Left lung (tissue), 14 donors: ENCODE measurements at regions of chr14 and their contacts with region 1.

Region 1: DNA sequence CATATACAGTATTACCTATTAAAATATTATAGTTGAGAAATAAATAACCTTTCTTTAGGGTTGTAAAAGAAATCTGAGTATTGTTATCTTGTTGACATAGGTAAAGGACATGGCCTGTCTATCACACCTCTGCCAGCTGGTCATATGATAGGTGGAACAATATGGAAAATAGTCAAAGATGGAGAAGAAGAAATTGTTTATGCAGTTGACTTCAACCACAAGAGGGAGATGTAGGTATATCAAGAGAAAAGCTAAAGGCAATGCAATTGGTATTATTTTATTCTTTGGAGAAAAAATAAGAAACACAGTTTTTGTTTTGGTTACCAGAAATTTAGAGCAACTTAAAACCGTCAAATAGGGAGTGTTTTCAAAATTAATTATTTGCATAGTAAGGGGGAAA is 13.5 kb downstream of the CPSF2 start:
- DNase-seq: peak in 1 of 4 donors; percentile 53
- ATAC-seq: no peak
- H3K4me3 ChIP-seq: no peak overlapping the region
- H3K27ac ChIP-seq: no peak overlapping the region
- H3K4me1 ChIP-seq: peaks cover 0 to 4% of the 10 kb centered on the region in 2 donors
- H3K27me3 ChIP-seq: no peaks in the 10 kb centered on the region
- CTCF ChIP-seq: peak in 1 of 2 donors; percentile 36

Region 2: DNA sequence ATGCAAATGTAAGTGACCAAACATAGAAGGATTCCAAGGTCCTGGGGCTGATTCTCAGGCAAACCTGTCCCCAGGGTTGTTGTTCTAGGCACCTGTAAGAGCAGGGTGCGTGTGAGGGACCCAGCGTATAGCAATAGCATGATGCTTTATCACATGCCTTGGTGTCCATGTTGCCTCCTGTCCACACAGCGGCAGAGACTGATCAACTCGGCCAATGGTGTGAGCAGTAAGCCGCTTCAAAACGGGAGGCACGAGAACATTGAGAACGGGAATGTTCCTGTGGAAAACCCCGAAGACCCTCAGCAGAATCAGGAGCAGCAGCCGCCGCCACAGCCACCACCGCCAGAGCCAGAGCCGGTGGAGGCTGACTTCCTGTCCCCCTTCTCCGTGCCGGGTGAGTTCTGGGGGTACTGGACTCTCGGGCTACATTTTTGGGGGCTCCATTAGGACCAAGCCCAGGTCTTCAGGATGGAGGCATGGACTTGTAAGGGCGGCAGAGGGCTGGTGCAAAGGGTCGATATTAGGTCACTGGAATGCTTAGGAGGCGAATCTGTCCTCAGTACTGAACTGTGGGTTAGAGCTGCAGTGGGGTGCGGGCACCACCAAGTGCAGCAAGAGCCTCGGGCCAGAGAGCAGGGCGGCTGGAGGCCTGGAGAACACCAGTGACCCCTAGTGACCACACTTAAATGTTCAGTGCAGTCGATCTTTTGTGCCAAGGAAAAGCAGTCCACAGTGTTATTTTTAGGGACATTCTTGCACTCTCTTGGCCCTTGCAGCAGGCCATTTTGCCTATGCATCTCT is 321.1 kb after region 1 on chr14:
- intact Hi-C with region 1: loop called in 1 of 2 experiments (anchors 5 kb)
- DNase-seq: peak; percentile 57 to 90 (median 76)
- ATAC-seq: peak; percentile 93
- H3K4me3 ChIP-seq: no peak overlapping the region
- H3K27ac ChIP-seq: peak overlapping the region in 1 of 2 donors; percentile 54
- H3K4me1 ChIP-seq: peaks cover 0 to 37% of the 10 kb centered on the region in 2 donors
- H3K27me3 ChIP-seq: no peaks in the 10 kb centered on the region
- CTCF ChIP-seq: peak; percentile 66 to 75

Region 3: DNA sequence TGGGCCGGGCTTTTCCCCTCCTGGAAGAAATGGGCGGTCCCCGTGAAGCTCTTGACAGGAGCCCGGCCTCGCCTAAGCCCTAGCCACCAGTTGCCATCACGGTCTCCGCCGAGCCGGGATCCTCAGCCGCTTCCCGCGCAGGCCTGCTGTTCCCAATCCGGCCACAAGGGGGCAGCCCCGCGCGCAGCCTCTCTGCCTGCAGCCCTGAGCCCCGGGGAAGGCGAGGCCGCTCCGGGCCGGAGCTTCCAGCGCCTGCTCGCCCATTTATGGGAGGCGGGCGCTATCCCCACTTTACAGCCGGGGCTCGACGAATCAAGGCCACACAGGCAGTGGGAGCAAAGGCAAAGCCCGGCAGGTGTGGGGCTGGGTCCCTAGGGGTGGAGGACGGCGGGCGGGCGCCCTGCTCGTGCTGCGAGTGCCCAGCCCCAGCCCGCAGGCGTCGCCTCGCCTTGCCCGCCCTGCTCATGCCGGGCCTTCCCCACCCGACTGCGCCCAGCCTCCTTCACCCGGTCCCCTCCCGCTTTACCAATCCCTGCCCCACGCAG is 551.7 kb after region 1 on chr14:
- intact Hi-C with region 1: loop called in 1 of 2 experiments (anchors 10 kb)
- DNase-seq: peak; percentile 63 to 92 (median 74)
- ATAC-seq: peak; percentile 93
- H3K4me3 ChIP-seq: peak overlapping the region; percentile 18 to 43
- H3K27ac ChIP-seq: no peak overlapping the region
- H3K4me1 ChIP-seq: peaks cover under 1 to 5% of the 10 kb centered on the region in 2 donors
- H3K27me3 ChIP-seq: no peaks in the 10 kb centered on the region
- CTCF ChIP-seq: peak; percentile 84 to 97